ENCODE measurements at regions of chr11 and their contacts with region 1.

Region 1: DNA sequence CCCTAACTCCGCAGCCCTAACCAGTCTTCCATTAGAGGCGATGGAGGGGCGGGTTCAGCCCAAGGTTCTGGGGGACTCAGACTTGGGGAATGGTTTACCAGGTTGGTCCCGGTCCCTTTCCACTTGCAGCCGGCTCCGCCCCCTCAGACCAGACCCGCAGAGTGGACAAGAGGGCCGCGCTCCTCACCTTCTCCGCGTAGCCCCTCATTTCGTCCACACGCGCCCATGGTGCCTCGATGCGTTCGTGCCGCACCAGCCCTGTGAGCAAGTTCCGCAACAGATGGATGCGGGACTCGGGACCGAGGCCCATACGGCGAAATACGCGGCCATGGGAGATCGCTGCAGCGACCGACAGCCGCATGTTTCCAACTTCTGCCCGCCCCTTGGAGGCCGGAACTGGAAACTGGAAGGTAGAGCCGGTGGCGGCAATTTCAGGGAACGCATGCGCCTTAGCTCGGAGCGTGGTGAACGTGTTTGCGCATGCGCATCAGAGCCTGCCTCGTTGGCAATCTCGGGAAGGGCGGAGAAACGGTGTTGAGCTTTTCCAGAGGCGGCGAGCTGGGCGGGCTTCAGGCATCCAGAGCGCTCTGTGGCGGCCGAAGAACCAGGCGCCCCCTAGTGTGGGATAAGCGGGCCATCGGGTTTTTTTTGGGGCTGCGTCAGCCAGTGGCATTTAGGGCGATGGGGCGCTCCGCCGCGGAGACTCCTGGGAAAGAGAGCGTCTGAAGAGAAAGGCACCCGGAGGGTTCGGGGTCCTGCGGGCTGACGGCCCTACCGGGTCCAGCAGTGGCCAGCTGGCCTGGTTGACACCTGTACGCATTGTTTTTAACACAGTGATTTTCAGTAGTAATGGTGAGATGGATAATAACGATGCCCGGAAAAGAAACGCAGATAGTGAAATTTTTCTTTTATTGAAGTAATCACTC is at the start of gene MRPL17:
- DNase-seq: peak; percentile 99 to 100
- ATAC-seq: peak; percentile 97 to 99 (median 98)
- H3K4me3 ChIP-seq: peak within 1 kb of the TSS; percentile 67 to 94 (median 82)
- H3K27ac ChIP-seq: peak within 1 kb of the TSS; percentile 52 to 97 (median 91)
- H3K4me1 ChIP-seq: peaks cover 5 to 36% (median 27%) of the 10 kb centered on the region in 9 donors
- H3K27me3 ChIP-seq: no peaks in the 10 kb centered on the region
- CTCF ChIP-seq: peak; percentile 78 to 99 (median 93)
- total RNA-seq, gene MRPL17: 36.7 to 61.4 (median 45.5) TPM

Region 2: DNA sequence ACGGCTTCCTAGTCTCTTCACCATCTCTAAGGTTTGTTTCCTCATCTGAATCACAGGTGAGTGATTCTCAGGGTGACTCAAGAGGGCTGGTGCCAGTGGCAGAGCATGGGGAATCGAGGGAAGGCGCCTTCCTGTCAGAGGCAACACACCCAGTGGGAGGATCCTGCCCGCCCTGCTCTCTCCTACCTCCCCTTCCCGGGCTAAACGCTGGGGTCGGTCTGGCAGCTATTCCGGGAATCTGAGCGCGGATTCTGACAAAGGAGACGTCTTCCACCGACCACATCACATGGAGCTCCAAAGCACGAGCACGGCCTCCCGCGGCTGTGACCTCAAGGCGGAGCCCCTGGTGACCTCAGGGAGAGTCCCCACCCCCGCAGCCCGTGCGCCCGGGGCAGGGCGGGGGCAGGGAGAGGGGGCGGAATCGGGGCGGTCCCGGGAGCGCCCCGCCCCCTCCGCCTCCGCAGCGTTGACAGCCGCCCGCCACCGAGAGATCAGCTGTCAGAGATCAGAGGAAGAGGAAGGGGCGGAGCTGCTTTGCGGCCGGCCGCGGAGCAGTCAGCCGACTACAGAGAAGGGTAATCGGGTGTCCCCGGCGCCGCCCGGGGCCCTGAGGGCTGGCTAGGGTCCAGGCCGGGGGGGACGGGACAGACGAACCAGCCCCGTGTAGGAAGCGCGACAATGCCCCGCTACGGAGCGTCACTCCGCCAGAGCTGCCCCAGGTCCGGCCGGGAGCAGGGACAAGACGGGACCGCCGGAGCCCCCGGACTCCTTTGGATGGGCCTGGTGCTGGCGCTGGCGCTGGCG is 293.1 kb before region 1 on chr11 and contains the start of gene SMPD1:
- intact Hi-C with region 1: loop called in 2 of 10 experiments (anchors 10 kb)
- DNase-seq: peak; percentile 94
- ATAC-seq: peak; percentile 98 to 99 (median 98)
- H3K4me3 ChIP-seq: peak within 1 kb of the TSS; percentile 66 to 98 (median 80)
- H3K27ac ChIP-seq: peak within 1 kb of the TSS; percentile 66 to 98 (median 90)
- H3K4me1 ChIP-seq: peaks cover 5 to 28% (median 22%) of the 10 kb centered on the region in 9 donors
- H3K27me3 ChIP-seq: no peaks in the 10 kb centered on the region
- CTCF ChIP-seq: no peak
- total RNA-seq, gene SMPD1: 57.4 to 88.1 (median 67.6) TPM

Region 3: DNA sequence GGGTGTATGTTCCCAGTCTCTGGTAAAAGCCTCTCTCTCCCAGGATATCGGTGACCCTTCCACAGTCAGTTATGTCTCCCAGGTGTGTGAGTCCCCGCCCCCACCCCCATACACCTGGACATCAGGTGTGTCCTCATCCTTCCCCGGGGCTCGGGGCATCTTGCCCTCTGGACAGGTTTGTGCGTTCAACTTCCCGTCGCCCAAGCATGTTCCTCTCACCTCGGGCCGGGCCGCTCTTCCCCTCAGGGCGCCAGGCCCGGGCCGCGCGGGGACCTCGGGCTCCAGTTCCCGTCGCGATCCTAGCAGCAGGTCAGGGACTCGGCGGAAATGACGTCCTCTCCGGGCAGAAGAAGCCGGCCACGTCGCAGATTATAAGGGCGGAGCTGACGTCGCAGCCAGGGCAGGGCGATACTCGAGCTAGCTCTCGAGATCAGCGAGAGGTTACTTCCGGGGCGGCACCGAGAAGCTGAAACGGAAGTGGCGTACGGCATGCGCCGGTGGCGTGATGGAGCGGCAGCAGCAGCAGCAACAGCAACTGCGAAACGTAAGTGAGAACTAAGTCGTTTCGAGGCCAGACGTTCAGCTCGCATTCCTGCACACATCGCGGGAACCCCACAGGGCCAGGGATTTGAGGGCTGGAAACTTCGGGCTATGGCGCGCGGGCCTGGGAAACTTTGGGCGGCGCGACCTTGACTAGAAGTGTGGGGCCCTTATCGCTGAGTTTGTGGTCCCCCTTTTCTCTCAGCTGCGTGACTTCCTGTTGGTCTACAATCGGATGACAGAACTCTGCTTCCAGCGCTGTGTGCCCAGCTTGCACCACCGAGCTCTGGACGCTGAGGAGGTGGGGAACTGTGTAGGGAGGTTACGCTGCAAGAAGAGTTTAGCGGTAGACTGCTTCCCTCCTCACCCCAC is 201.9 kb before region 1 on chr11 and contains the starts of genes ARFIP2 and TIMM10B:
- intact Hi-C with region 1: loop called in 1 of 10 experiments (anchors 5 kb)
- DNase-seq: peak; percentile 98 to 99
- ATAC-seq: peak; percentile 96 to 99 (median 99)
- H3K4me3 ChIP-seq: peak within 1 kb of the TSS; percentile 68 to 90 (median 80)
- H3K27ac ChIP-seq: peak within 1 kb of the TSS; percentile 41 to 94 (median 90)
- H3K4me1 ChIP-seq: peaks cover 7 to 36% (median 27%) of the 10 kb centered on the region in 9 donors
- H3K27me3 ChIP-seq: no peaks in the 10 kb centered on the region
- CTCF ChIP-seq: no peak
- total RNA-seq, gene ARFIP2: 12.4 to 23.0 (median 14.8) TPM
- total RNA-seq, gene TIMM10B: 13.8 to 21.6 (median 17.5) TPM

Region 4: GRCh38 chr11:6523253-6523652 is 159.9 kb before region 1 on chr11:
- intact Hi-C with region 1: loop called in 2 of 10 experiments (anchors 5 to 10 kb)
- DNase-seq: no peak
- ATAC-seq: no peak
- H3K4me3 ChIP-seq: no peak overlapping the region
- H3K27ac ChIP-seq: no peak overlapping the region
- H3K4me1 ChIP-seq: no peaks in the 10 kb centered on the region
- H3K27me3 ChIP-seq: no peaks in the 10 kb centered on the region
- CTCF ChIP-seq: no peak

Region 5: DNA sequence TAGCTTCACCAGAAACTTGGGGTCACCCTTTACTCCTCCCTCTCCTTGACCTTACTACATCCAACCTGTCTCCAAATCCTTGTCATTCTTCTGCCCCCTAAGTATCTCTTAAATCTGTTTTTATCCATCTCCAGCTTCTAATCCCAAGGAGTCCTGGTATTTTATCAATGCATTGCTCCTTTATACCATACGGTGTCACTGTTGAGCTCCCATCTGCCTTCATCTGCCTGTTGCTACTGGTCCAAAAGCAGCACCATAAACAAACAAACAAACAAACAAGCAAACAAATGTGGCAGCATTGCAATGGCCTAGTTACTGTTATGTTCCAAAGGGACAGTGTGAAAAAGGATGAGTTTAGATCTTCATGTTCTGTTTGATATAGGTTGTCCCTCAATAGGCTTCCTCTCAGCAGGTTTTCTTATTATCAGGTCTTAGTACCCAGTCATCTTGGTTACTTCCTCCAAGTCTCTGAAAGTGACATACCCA is 151.9 kb before region 1 on chr11:
- intact Hi-C with region 1: loop called in 9 of 10 experiments (anchors 1 to 10 kb)
- DNase-seq: peak in 1 of 2 donors; percentile 38
- ATAC-seq: peak in 5 of 8 donors; percentile 47 to 75 (median 67)
- H3K4me3 ChIP-seq: no peak overlapping the region
- H3K27ac ChIP-seq: no peak overlapping the region
- H3K4me1 ChIP-seq: no peaks in the 10 kb centered on the region
- H3K27me3 ChIP-seq: no peaks in the 10 kb centered on the region
- CTCF ChIP-seq: peak; percentile 55 to 88 (median 79)

Region 6: DNA sequence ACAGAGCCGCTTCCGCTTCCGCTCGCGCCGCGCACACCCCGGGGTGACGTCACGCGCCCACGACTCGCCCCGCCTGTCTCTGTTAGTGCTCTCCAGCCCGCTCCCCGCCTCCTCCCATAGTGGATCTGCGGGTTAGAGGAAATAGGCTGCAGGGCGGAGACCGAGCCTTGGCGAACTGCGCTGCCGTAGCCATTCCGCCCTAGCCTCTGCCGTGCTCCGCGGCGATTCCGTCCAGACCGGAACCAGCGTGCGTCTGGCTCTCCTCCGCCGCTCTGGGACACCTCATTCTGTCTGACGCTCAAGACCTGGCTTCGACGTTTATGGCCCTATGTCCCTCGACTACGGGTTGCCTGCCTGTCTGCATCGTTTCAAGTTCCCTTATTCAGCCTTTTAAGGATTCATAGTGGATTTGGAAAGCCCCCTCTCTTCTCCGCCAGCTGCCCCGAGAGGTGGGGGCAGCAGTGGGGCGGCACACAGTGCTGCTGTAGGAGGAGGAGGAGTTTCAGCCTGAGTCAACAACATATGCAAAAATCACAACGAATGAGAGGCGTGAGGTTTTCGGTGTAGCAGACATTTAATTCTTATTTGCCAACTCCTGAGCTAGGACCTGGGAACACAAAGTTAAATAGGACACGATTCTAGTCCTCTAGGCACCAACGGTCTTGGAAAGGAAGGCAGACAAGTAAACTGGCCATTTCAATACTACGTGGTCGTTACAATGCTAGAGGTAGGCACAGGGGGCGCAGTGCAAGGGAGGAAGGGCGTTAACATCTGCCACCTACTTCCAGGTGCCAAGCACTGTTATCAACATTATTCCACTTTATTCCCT is 70.8 kb before region 1 on chr11 and contains the start of gene TAF10:
- intact Hi-C with region 1: loop called in 5 of 10 experiments (anchors 1 to 10 kb)
- DNase-seq: peak; percentile 98
- ATAC-seq: peak; percentile 94 to 97 (median 96)
- H3K4me3 ChIP-seq: peak within 1 kb of the TSS; percentile 57 to 82 (median 74)
- H3K27ac ChIP-seq: peak within 1 kb of the TSS; percentile 89 to 100 (median 98)
- H3K4me1 ChIP-seq: peaks cover 10 to 64% (median 40%) of the 10 kb centered on the region in 9 donors
- H3K27me3 ChIP-seq: no peaks in the 10 kb centered on the region
- CTCF ChIP-seq: peak in 7 of 9 donors; percentile 23 to 52 (median 40)
- total RNA-seq, gene TAF10: 78.0 to 101 (median 89.7) TPM

Region 7: DNA sequence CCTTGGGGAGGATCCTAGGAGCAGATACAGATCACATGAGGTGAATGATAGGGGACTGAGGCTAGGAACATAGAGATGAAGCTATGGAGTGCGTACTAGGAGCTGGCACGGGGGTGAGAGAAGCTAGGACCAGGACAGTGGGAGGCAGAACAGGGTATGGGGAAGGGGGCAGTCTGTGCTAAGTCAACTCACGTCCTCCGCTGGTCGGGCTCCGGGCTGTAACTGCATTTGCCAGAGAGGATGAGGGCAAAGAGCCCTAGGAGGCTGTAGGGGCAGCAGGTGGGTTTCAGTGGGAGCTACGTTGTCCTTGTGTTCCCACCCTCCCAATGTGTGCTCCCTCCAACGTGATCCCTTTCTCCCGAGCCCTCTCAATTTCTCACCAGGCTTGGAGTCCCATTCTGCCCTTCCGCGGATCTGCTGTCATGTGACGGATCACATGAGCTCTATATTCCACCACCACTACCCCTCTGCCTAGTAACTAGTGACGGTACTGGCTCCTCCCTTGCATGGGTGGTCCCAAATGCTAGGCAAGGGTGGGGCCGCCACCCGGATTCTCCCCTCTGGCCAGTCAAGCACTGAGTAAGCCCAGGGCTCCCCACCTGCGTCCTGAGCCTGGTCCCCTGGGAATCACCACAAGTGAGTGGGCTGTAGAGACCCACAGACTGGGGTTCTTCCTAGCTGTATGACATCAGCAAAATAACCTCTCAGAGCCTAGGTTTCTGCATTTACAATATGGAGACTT is 64.0 kb before region 1 on chr11 and contains the start of gene TPP1:
- intact Hi-C with region 1: loop called in 3 of 10 experiments (anchors 2 to 10 kb)
- DNase-seq: peak; percentile 85 to 96
- ATAC-seq: peak; percentile 95 to 98 (median 98)
- H3K4me3 ChIP-seq: peak within 1 kb of the TSS; percentile 50 to 90 (median 72)
- H3K27ac ChIP-seq: peak within 1 kb of the TSS; percentile 5 to 94 (median 84)
- H3K4me1 ChIP-seq: peaks cover 4 to 41% (median 22%) of the 10 kb centered on the region in 9 donors
- H3K27me3 ChIP-seq: no peaks in the 10 kb centered on the region
- CTCF ChIP-seq: no peak
- total RNA-seq, gene TPP1: 56.3 to 132 (median 72.6) TPM

Region 8: GRCh38 chr11:6894097-6894496 is 210.9 kb after region 1 on chr11:
- intact Hi-C with region 1: no loop called
- DNase-seq: no peak
- ATAC-seq: no peak
- H3K4me3 ChIP-seq: no peak overlapping the region
- H3K27ac ChIP-seq: no peak overlapping the region
- H3K4me1 ChIP-seq: no peaks in the 10 kb centered on the region
- H3K27me3 ChIP-seq: no peaks in the 10 kb centered on the region
- CTCF ChIP-seq: no peak